Activated CD4-positive, alpha-beta memory T cell treated with anti-CD3 and anti-CD28 coated beads, Interleukin-2, amount 10 ng/mL, durations not matched to agents 7 days and 5 days (primary cell): ENCODE measurements at regions of chr2 and their contacts with region 1.

Region 1: DNA sequence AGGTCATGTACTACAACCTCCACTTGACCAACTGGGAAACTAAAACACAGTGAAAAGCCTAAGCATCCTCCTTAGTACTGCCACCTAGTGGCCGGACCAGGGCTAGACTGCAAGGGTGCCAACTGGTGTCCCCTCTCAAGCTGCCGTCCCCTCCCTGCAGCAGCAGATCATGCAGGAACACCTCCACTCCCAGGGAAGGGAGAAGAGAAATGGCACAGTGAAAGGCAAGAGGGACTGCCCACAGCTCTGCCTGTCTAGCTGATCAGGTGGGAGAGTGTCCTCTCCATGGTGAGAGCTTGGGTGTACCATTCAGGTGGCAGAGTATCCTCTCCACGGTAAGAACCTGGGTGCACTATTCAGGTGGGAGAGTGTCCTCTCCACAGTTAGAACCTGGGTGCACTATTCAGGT is 78.1 kb downstream of the AAK1 start:
- DNase-seq: peak; percentile 70
- H3K4me3 Mint-ChIP-seq: no peak overlapping the region
- H3K27ac Mint-ChIP-seq: peak overlapping the region; percentile 37
- H3K4me1 Mint-ChIP-seq: peaks cover 42% of the 10 kb centered on the region
- H3K27me3 Mint-ChIP-seq: no peaks in the 10 kb centered on the region

Region 2: DNA sequence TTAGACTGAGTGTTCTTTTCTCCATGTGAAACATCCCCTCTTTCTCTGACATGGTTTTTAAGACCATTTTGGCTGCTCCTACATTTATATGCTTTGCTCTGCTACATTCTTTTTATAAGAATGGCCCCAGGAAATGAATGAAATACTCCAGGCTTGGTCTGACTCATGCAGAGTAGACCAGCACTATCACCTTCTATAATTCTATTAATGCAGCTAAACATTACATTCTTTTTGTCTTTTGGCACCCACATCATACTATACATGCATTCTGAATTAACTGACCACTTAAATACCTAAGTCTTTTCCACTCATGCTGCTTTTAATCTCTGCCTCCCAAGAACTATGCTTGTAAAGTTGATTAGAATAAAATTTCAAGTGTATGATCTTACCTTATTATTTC is 16.0 kb before region 1 on chr2:
- CTCF ChIA-PET with region 1: interaction called, 33 read pairs
- POLR2A ChIA-PET with region 1: interaction called, 3 read pairs
- DNase-seq: no peak
- H3K4me3 Mint-ChIP-seq: no peak overlapping the region
- H3K27ac Mint-ChIP-seq: no peak overlapping the region
- H3K4me1 Mint-ChIP-seq: peaks cover 4% of the 10 kb centered on the region
- H3K27me3 Mint-ChIP-seq: no peaks in the 10 kb centered on the region

Region 3: DNA sequence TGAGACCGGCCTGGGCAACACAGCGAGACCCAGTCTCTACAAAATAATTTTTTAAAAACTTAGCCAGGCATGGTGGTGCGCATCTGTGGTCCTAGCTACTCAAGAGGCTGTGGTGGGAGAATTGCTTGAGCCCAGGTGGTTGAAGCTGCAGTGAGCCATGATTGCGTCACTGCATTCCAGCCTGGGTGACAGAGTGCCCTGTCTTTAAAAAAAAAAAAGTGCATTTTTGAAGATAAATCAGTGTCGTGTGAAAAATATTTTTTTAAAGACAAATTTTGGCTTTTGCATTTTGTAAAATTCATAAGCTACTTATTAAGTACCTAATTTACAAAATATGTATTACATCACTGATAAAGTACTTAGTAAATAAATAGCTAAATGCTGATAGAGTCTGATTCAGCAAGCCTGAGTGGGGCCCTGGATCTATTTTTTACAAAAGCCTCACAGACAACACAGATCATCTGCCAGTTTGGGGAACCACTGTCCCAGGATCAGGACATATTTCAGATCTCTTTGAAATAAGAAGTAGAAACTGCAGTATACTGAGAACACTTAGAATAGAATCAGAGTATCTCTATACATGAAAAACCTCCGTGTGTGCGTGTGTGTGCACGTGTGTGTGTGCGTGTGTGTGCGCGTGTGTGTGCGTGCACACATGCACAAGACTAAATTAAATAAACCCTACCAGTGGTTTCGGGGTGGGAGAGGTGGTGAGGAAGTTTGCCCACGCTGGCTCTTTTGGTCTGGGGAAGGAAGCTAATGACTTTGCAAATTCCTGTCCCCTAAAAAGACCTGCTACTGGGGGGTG is 16.5 kb after region 1 on chr2:
- CTCF ChIA-PET with region 1: interaction called, 50 read pairs
- POLR2A ChIA-PET with region 1: interaction called, 3 read pairs
- DNase-seq: no peak
- H3K4me3 Mint-ChIP-seq: peak overlapping the region; percentile 5
- H3K27ac Mint-ChIP-seq: no peak overlapping the region
- H3K4me1 Mint-ChIP-seq: peaks cover 73% of the 10 kb centered on the region
- H3K27me3 Mint-ChIP-seq: no peaks in the 10 kb centered on the region

Region 4: GRCh38 chr2:69594341-69594740 is 28.9 kb after region 1 on chr2:
- CTCF ChIA-PET with region 1: interaction called, 25 read pairs
- POLR2A ChIA-PET with region 1: interaction called, 4 read pairs
- DNase-seq: no peak
- H3K4me3 Mint-ChIP-seq: no peak overlapping the region
- H3K27ac Mint-ChIP-seq: no peak overlapping the region
- H3K4me1 Mint-ChIP-seq: peaks cover 54% of the 10 kb centered on the region
- H3K27me3 Mint-ChIP-seq: no peaks in the 10 kb centered on the region

Region 5: DNA sequence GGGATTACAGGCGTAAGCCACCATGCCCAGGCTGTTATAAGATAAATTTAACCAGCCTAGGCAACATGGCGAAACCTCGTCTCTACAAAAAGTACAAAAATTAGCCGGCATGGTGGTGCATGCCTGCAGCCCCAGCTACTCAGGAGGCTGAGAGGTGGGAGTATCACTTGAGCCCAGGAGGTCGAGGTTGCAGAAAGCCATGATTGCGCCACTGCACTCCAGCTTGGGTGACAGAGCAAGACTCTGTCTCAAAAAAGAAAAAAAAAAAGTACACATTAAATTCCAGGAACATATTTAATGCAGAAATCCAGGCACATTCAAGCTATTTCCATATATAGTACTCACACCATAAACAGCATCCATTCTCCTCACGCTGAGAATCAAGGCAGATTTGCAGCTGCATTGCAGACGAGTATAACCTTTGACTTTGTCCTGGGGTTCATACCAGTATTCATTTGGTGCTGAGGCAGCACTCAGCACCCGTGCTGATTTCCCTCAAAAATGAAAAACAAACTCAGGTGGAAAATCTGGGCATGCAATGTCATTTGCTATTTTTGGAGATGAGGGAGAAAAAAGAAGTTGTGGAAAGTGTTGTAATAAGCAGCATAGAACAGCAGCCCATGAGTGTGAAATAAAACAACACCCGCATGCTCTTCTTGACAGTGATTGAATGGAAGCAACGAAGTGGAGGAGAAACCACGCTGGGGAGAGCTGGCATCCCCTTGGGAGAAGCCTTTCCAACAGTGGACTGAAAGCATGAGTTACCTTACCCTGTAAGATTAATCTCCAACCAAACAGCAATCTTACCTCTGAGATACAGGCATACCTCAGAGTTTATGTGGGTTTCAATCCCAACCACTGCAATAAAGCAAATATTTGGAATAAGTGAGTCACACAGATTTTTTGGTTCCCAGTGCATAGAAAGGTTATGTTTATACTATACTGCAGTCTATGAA is 129.7 kb after region 1 on chr2:
- CTCF ChIA-PET with region 1: interaction called, 10 read pairs
- POLR2A ChIA-PET with region 1: no interaction called
- DNase-seq: no peak
- H3K4me3 Mint-ChIP-seq: no peak overlapping the region
- H3K27ac Mint-ChIP-seq: no peak overlapping the region
- H3K4me1 Mint-ChIP-seq: peaks cover 57% of the 10 kb centered on the region
- H3K27me3 Mint-ChIP-seq: peaks cover 4% of the 10 kb centered on the region